CD4-positive, alpha-beta memory T cell (primary cell): ENCODE measurements at regions of chr7 and their contacts with region 1.

Region 1: DNA sequence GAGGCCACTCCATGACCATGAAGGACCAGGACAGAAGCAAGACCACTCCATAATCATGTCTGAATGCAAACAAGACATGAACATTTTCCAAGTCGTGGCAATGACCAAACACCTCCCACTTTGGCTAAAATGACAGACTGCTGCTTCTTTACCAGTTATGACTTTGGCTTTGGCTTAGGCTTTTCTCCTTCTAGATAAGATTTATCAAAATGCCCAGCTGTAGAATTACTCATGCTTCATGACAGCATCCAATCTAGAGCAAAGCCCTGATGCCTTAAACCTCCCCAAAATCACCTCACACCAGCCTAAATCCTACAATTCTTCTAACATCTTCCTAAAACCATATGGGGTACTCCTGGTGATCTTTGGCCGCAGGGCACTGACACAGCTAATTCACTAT is 102.1 kb downstream of the VPS41 start:
- DNase-seq: no peak
- H3K4me3 ChIP-seq: no peak overlapping the region
- H3K4me3 Mint-ChIP-seq: no peak overlapping the region
- H3K27ac ChIP-seq: no peak overlapping the region
- H3K27ac Mint-ChIP-seq: no peak overlapping the region
- H3K4me1 ChIP-seq: no peaks in the 10 kb centered on the region
- H3K4me1 Mint-ChIP-seq: peaks cover 0 to 2% (median 0%) of the 10 kb centered on the region in 4 donors
- H3K27me3 ChIP-seq: no peaks in the 10 kb centered on the region
- H3K27me3 Mint-ChIP-seq: no peaks in the 10 kb centered on the region

Region 2: GRCh38 chr7:38796626-38797501 is 10.0 kb before region 1 on chr7:
- CTCF ChIA-PET with region 1: interaction called, 39 read pairs
- POLR2A ChIA-PET with region 1: no interaction called
- intact Hi-C with region 1: no loop called
- DNase-seq: peak in 4 of 5 donors; percentile 22 to 44 (median 30)
- H3K4me3 ChIP-seq: no peak overlapping the region
- H3K4me3 Mint-ChIP-seq: no peak overlapping the region
- H3K27ac ChIP-seq: no peak overlapping the region
- H3K27ac Mint-ChIP-seq: peak overlapping the region in 1 of 7 donors; percentile 67
- H3K4me1 ChIP-seq: no peaks in the 10 kb centered on the region
- H3K4me1 Mint-ChIP-seq: peaks cover 0 to 3% (median 0%) of the 10 kb centered on the region in 4 donors
- H3K27me3 ChIP-seq: no peaks in the 10 kb centered on the region
- H3K27me3 Mint-ChIP-seq: no peaks in the 10 kb centered on the region